Head of caudate nucleus (tissue), 42 donors: ENCODE measurements at regions of chr6 and their contacts with region 1.

Region 1: GRCh38 chr6:26204332-26205165 is 117.3 kb downstream of the HFE start:
- DNase-seq: peak; percentile 88 to 99 (median 96)

Region 2: DNA sequence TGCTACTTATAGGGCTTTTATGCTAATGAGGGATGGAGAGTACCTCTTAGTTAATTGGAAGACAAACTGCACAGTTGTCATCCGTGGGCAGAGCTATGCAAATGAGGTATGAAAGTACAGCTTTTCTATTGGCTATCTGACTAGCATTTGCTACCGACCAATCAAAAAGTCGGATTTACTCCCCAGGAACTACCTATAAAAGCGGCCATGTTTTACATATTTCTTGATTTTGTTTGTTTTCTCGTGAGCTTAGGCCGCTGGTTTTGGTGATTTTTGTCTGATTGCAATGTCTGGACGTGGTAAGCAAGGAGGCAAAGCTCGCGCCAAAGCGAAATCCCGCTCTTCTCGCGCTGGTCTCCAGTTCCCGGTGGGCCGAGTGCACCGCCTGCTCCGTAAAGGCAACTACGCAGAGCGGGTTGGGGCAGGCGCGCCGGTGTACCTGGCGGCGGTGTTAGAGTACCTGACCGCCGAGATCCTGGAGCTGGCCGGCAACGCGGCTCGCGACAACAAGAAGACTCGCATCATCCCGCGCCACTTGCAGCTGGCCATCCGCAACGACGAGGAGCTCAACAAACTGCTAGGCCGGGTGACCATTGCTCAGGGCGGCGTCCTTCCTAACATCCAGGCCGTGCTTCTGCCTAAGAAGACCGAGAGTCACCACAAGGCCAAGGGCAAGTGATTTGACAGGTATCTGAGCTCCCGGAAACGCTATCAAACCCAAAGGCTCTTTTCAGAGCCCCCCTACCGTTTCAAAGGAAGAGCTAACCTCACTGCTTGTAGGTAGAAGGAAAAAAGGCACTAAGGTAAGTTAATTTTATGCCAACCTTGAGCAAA is 80.4 kb before region 1 on chr6:
- intact Hi-C with region 1: loop called (anchors 5 kb)
- DNase-seq: peak in 39 of 42 donors; percentile 29 to 94 (median 75)

Region 3: GRCh38 chr6:26163427-26164119 is 41.0 kb before region 1 on chr6:
- intact Hi-C with region 1: no loop called
- DNase-seq: no peak

Region 4: DNA sequence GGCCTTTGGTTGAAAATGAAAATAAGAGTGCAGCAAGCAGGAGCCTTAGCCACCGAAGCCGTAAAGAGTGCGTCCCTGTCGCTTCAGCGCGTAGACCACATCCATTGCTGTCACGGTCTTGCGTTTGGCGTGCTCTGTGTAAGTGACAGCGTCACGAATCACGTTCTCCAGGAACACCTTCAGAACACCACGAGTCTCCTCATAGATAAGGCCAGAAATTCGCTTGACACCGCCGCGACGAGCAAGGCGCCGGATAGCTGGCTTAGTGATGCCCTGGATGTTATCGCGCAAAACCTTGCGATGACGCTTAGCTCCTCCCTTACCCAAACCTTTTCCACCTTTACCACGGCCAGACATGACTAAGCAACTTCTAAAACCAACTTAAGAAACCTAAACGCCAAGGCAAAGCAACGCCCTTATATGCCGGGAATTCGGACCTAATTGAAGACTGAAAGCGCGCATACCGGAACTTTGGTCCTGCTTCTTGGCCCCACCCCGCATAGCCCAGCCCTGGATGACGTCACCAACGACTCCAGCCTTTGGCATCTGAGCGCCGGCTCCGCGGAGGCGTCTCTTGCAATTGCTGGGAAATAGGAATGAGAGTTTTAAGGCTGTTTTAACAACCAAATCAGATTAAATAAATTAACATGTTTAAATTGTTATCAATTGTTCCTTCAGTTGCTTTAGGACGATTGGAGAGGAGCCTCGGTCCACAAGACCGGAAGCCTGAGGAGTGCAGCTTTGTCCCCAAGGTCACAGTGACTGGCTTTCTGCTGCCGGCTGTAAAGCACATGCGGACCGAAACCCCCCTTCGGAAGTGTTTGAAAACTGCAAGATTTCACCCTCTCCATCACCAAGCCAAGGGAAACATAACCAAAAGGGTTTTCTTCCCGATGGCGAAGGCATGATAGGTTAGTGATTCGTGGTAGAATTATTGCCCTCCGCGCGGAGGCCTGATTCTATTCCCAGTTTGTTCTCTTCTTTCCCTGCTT is 80.9 kb after region 1 on chr6:
- intact Hi-C with region 1: loop called (anchors 10 kb)
- DNase-seq: peak; percentile 91 to 98 (median 96)